ENCODE measurements at regions of chr17 and their contacts with region 1.

Region 1: GRCh38 chr17:82781894-82782274 is 30.0 kb downstream of the TBCD start:
- DNase-seq: peak; percentile 92

Region 2: DNA sequence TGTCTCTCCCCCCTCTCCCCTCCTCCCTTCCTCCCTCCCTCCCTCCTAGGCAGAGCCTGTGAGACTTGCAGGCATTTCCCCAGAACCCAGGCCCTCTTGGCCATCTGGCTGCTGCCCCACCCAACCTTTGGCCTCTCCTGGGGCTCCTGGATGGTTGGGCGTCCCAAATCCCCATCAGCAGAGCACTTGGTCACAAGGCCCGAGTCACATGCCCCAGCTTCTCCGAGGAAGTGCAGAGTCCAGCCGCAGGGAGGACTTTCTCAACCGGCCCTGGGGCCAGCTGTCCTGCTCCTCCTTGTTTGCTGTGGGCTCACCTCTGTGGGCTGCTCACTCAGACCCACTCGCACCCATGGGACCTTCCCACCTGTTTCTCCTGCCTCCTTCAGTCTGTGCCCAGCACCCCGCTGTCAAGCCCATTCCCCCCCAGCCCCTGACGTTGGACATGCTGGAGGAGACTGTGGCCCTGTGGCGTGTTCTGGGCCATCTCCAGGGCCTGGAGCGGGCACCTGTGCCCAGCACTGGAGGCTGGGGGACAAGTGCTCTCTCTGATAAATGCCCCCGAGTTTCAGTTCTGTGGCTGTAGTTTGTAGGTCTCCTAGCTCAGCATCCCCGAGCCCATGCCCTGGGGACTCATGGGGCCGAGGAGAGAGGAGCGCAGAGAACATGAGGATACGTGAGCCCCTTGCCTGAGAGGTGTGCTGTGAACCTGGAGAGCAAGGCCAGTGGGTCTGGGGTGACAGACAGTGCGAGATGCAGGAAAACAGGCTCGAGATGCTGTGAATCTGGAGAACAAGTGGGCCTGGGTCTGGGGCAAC is 100.2 kb after region 1 on chr17:
- intact Hi-C with region 1: no loop called
- DNase-seq: no peak

Region 3: DNA sequence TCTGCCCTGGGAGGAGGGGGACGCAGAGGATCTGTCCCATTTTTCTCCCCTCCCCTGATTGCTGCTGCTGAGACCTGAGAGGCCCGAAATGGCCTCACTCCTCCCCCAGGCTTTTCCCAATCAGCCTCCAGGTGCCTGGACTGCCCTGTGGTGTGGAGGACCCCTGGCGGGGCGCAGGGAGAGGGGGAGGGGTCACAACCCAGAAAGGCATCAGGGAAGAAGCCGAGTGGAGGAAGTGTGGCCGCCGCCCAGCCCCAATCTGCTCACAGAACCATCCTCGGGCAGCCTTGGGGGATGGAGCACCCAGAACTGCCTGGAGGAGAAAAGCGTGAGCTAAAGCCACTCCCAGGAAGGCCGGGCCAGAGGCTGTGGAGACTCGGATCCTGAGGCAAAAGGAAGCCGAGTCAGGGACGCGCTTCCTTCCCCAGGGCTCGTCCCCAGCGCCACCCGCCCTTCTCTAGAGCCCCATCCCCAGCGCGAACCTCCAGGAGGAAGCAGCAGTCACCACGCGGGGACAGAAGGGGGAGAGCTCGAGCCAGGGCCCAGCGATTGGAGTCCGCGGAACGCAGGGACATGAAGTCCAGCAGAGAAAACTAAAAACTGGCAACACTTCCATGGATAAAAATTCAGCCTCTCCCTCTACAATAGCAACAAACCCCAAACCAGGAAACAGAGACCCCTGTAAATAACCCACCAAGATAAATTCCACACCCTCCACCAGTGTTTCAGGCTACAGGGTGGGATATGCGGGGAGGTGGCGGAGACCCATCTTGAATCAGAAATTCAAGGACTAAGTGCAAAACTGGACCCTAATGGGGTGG is 181.2 kb after region 1 on chr17:
- intact Hi-C with region 1: loop called (anchors 2 kb)
- DNase-seq: peak; percentile 91